ENCODE measurements at regions of chr19 and their contacts with region 1.

Region 1: GRCh38 chr19:38964738-38965137 is 10.8 kb downstream of the FBXO17 start:
- DNase-seq: no peak
- ATAC-seq: no peak
- H3K4me3 ChIP-seq: no peak overlapping the region
- H3K27ac ChIP-seq: no peak overlapping the region
- H3K4me1 ChIP-seq: peaks cover 3 to 7% of the 10 kb centered on the region in 2 experiments; a peak in 3 of 5 replicates
- H3K27me3 ChIP-seq: no peaks in the 10 kb centered on the region
- CTCF ChIP-seq: no peak
- EP300 ChIP-seq: no peak
- POLR2A ChIP-seq: no peak
- RAD21 ChIP-seq: no peak

Region 2: GRCh38 chr19:38989066-38989605 is 24.4 kb after region 1 on chr19:
- CTCF ChIA-PET with region 1: no interaction called
- POLR2A ChIA-PET with region 1: no interaction called
- in situ Hi-C with region 1: no loop called
- intact Hi-C with region 1: no loop called
- DNase-seq: peak in 1 of 4 experiments; percentile 21
- ATAC-seq: peak; percentile 63
- H3K4me3 ChIP-seq: no peak overlapping the region
- H3K27ac ChIP-seq: no peak overlapping the region
- H3K4me1 ChIP-seq: peaks cover 0 to 5% of the 10 kb centered on the region in 2 experiments; a peak in 1 of 5 replicates
- H3K27me3 ChIP-seq: peaks cover 6 to 37% of the 10 kb centered on the region in 2 experiments; a peak in 4 of 5 replicates
- CTCF ChIP-seq: no peak
- EP300 ChIP-seq: no peak
- POLR2A ChIP-seq: no peak
- RAD21 ChIP-seq: no peak

Region 3: GRCh38 chr19:39031368-39032062 is 66.8 kb after region 1 on chr19:
- CTCF ChIA-PET with region 1: interaction called, 8 read pairs
- POLR2A ChIA-PET with region 1: interaction called, 3 read pairs
- in situ Hi-C with region 1: no loop called
- intact Hi-C with region 1: loop called (anchors 2 kb)
- DNase-seq: peak; percentile 95 to 97 (median 96)
- ATAC-seq: peak; percentile 98
- H3K4me3 ChIP-seq: peak overlapping the region; percentile 54
- H3K27ac ChIP-seq: peak overlapping the region; percentile 64; the same call in 1 of the 3 replicates
- H3K4me1 ChIP-seq: peaks cover 7 to 23% of the 10 kb centered on the region in 2 experiments; a peak in 4 of 5 replicates
- H3K27me3 ChIP-seq: no peaks in the 10 kb centered on the region
- CTCF ChIP-seq: no peak
- EP300 ChIP-seq: no peak
- POLR2A ChIP-seq: peak; percentile 27; the same call in 1 of the 2 replicates
- RAD21 ChIP-seq: no peak

Region 4: DNA sequence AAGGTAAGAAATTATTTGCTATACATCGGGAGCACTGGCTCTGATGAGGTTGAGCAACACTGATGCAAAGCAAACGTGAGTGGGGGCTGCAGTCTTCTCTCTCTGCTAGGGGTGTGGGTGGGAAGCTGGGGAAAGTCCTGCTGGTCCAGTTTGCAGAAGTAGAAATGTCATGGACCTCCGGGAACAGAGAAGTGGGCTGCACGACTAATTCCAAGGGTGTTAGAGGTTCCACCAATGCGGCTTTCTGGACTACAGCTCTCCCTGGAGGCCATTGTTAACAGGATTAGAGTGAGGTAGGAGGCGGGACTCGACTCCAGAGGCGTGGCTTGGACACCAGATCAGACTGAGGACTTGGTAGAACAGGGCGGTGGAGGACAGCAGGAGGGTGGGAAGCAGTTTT is 73.4 kb after region 1 on chr19:
- CTCF ChIA-PET with region 1: interaction called, 8 read pairs
- POLR2A ChIA-PET with region 1: no interaction called
- in situ Hi-C with region 1: no loop called
- intact Hi-C with region 1: loop called (anchors 1 kb)
- DNase-seq: peak; percentile 76 to 84 (median 78)
- ATAC-seq: peak; percentile 100
- H3K4me3 ChIP-seq: no peak overlapping the region
- H3K27ac ChIP-seq: no peak overlapping the region
- H3K4me1 ChIP-seq: peaks cover 0 to 3% of the 10 kb centered on the region in 2 experiments; a peak in 1 of 5 replicates
- H3K27me3 ChIP-seq: no peaks in the 10 kb centered on the region
- CTCF ChIP-seq: peak; percentile 61 to 78 (median 70)
- EP300 ChIP-seq: no peak
- POLR2A ChIP-seq: no peak
- RAD21 ChIP-seq: peak; percentile 62 to 74

Region 5: DNA sequence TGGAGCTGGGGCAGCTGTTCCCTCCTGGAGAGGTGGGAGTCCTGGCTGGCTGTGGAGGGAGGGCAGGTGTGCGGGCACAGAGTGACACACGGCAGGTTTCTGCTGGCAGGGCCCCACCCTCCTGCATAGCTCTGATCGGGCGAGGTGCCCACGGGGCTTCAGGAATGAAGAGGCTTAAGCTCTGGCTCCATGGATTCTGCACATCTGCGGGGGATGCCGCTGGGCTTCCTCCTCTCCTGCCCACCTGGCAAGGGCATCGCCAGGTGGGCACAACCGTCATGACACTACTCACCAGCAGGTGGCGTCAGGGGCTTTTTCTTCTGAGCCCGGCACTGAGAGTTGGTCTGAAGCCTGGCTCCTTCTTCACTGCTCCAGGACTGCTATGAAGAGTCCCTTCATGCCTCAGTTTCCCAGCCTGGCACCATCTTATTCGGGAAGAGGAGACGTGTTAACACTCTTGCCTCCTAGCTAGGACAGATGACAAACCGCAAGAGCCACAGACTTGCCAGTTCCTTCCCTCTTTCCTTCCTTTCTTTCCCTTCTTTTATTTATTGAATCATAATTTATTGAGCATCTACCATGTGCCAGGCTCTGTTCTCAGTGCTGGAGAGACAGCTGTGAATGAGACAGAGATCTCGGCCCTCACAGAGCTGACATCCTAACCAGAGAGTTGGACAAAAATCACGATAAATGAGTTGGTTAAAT is 145.7 kb after region 1 on chr19:
- CTCF ChIA-PET with region 1: no interaction called
- POLR2A ChIA-PET with region 1: interaction called, 4 read pairs
- in situ Hi-C with region 1: loop called (anchors 10 kb)
- intact Hi-C with region 1: loop called (anchors 5 kb)
- DNase-seq: peak; percentile 66 to 73 (median 70)
- ATAC-seq: peak; percentile 89
- H3K4me3 ChIP-seq: no peak overlapping the region
- H3K27ac ChIP-seq: no peak overlapping the region
- H3K4me1 ChIP-seq: peaks cover 0 to 23% of the 10 kb centered on the region in 2 experiments; a peak in 3 of 5 replicates
- H3K27me3 ChIP-seq: peaks cover 15 to 46% of the 10 kb centered on the region in 2 experiments; a peak in 4 of 5 replicates
- CTCF ChIP-seq: peak; percentile 70 to 89 (median 79)
- EP300 ChIP-seq: no peak
- POLR2A ChIP-seq: no peak
- RAD21 ChIP-seq: peak; percentile 48 to 76

Region 6: GRCh38 chr19:39187559-39187957 is 222.8 kb after region 1 on chr19:
- CTCF ChIA-PET with region 1: no interaction called
- POLR2A ChIA-PET with region 1: no interaction called
- in situ Hi-C with region 1: no loop called
- intact Hi-C with region 1: loop called (anchors 5 kb)
- DNase-seq: no peak
- ATAC-seq: peak; percentile 24
- H3K4me3 ChIP-seq: no peak overlapping the region
- H3K27ac ChIP-seq: no peak overlapping the region
- H3K4me1 ChIP-seq: peaks cover 0 to 11% of the 10 kb centered on the region in 2 experiments; a peak in 4 of 5 replicates
- H3K27me3 ChIP-seq: no peaks in the 10 kb centered on the region
- CTCF ChIP-seq: no peak
- EP300 ChIP-seq: no peak
- POLR2A ChIP-seq: no peak
- RAD21 ChIP-seq: no peak

Region 7: DNA sequence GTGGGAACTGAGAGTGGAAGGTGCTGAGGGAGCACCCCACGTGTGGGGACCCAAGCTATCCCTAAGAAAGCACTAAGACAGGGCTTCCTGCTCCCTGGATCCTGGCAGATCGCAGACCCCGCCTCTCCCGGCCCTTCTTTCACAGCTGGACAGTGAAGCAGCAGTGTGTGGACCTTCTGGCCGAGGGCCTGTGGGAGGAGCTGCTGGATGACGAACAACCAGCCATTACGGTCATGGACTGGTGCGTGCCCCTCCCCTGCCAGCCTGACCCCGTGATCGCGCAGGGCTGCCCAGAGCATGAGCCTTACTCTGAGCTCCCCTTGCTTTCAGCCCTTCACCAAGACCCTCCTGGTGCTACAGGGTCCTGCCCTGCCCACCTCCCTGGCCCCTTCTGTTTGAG is 234.3 kb after region 1 on chr19:
- CTCF ChIA-PET with region 1: interaction called, 3 read pairs
- POLR2A ChIA-PET with region 1: no interaction called
- in situ Hi-C with region 1: loop called (anchors 5 kb)
- intact Hi-C with region 1: no loop called
- DNase-seq: peak in 1 of 4 experiments; percentile 36
- ATAC-seq: peak; percentile 31; the same call in 2 of the 3 replicates
- H3K4me3 ChIP-seq: no peak overlapping the region
- H3K27ac ChIP-seq: no peak overlapping the region
- H3K4me1 ChIP-seq: peaks cover 8 to 65% of the 10 kb centered on the region in 2 experiments
- H3K27me3 ChIP-seq: peaks cover 3 to 27% of the 10 kb centered on the region in 2 experiments; a peak in 2 of 5 replicates
- CTCF ChIP-seq: no peak
- EP300 ChIP-seq: no peak
- POLR2A ChIP-seq: no peak
- RAD21 ChIP-seq: no peak